ENCODE measurements at regions of chr11 and their contacts with region 1.

Region 1: DNA sequence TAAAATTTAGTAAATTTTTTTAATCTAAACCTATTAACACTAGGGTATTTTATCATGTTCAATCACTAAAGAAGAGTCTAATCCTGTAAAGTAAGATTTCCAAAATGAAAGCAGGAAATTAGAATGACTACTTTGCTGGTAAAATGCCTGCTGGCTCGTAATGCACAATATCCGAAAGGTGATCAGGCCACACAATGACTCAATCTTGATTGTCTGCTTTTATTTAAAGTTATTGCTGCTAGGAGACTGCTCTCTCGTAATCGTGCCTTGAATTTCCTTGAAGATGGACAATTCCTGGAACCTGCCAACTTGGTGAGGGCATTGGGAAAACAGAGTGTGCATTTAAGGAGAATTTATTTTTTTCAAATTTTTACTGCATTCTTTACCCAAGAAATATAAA is 1786.5 kb upstream of the RAG2 start:
- DNase-seq: peak; percentile 85
- ATAC-seq: peak; percentile 94
- H3K4me3 ChIP-seq: no peak overlapping the region
- H3K27ac ChIP-seq: peak overlapping the region; percentile 52
- H3K4me1 ChIP-seq: peaks cover 7% of the 10 kb centered on the region; the same call in 1 of the 2 replicates
- H3K27me3 ChIP-seq: no peaks in the 10 kb centered on the region
- CTCF ChIP-seq: no peak

Region 2: DNA sequence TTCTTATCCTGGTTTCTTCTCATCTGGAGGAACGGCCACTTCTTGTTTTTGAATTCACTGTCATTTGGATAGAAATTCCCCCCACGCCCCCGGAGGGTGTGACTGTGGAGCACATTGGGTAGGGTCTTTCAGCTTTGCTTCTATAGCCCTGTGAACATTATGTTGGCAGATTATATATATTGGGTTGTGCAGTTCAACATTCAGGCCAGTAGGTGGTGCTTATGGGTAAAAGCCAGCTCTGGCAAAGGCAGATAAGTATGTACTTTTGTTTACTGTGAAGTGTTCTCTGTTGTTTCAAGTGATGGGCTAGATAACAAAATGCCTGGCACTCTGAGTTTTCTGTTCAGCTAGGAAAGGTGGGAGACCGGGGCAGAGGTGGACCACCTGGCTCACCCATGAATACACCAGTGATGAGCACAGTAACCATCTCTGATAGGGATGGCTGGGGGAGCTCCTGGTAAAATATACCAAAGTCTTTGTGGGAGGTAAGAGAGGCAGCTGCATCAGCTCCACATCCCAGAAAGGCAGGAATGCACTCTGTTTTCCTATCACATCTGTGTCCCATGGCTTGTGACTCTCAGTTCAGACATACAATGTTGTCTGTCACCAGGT is 438.3 kb before region 1 on chr11:
- CTCF ChIA-PET with region 1: no interaction called
- POLR2A ChIA-PET with region 1: no interaction called
- intact Hi-C with region 1: loop called (anchors 5 kb)
- DNase-seq: peak; percentile 54
- ATAC-seq: 0 out of 2 replicates have a peak, but pooled peaks have one; percentile 31
- H3K4me3 ChIP-seq: no peak overlapping the region
- H3K27ac ChIP-seq: no peak overlapping the region
- H3K4me1 ChIP-seq: peaks cover 11% of the 10 kb centered on the region
- H3K27me3 ChIP-seq: no peaks in the 10 kb centered on the region
- CTCF ChIP-seq: peak; percentile 69